B cell (primary cell): ENCODE measurements at regions of chr4 and their contacts with region 1.

Region 1: DNA sequence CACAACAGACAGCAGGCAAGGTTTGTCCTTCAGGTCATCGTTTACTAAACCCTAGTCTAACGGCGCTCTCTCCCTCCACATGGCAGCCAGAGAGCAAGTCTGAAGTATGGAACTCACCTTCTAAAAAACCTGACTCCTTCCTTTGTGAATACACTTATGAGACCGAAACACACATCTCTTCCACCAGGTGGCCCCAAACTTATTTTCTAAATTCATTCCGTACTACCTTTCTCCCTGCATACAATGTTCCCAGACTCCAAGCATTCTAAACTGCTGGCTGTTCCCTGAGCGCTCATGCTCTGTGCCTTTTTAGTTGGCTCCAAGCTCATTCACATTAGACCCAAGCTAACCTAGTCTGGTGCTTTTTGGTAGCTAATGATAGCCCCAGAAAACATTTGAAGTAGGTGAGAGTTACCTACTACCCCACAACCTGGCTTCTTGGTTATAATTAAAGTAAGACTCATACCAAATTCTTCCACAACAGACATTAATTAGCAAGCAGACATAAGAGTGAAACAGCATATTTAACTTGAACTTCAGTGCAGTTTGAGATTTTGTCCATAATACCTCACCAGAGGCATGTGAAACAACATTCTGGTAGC is 67.6 kb upstream of the DCLK2 start:
- DNase-seq: peak; percentile 60
- ATAC-seq: no peak
- H3K4me3 ChIP-seq: no peak overlapping the region
- H3K4me3 Mint-ChIP-seq: no peak overlapping the region
- H3K27ac ChIP-seq: no peak overlapping the region
- H3K27ac Mint-ChIP-seq: no peak overlapping the region
- H3K4me1 ChIP-seq: no peaks in the 10 kb centered on the region
- H3K4me1 Mint-ChIP-seq: no peaks in the 10 kb centered on the region
- H3K27me3 ChIP-seq: peaks cover 0 to 7% (median 2%) of the 10 kb centered on the region in 4 experiments
- H3K27me3 Mint-ChIP-seq: peaks cover 6% of the 10 kb centered on the region
- CTCF ChIP-seq: peak; percentile 60

Region 2: DNA sequence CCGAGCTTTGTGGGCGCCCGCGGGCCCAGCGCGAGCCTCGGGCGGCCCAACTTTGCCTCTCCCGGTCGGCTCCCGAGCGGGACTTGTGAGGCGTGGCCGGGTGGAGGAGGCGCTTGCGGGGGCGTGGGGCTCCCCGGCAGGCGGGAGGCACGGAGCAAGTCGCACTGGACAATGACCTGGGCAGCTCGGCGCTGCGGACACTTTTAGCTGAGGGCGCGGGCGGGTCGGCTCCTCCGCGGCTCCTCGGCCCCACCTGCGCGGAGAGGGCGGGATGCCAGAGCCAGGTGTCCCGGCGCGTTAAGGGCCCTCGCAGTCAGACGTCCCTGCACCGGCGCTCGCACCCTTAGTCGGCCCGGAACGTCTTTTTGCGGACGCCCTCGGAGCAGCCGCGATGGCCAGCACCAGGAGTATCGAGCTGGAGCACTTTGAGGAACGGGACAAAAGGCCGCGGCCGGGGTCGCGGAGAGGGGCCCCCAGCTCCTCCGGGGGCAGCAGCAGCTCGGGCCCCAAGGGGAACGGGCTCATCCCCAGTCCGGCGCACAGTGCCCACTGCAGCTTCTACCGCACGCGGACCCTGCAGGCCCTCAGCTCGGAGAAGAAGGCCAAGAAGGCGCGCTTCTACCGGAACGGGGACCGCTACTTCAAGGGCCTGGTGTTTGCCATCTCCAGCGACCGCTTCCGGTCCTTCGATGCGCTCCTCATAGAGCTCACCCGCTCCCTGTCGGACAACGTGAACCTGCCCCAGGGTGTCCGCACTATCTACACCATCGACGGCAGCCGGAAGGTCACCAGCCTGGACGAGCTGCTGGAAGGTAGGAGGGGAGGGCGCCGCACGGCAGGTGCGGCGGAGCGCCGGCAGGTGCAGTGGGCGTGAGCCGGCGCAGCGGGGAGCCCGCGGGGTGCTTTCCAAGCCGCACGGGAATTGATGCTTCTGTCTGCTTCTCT is 68.3 kb after region 1 on chr4:
- CTCF ChIA-PET with region 1: interaction called, 10 read pairs
- POLR2A ChIA-PET with region 1: no interaction called
- intact Hi-C with region 1: no loop called
- DNase-seq: peak; percentile 79
- ATAC-seq: peak; percentile 63
- H3K4me3 ChIP-seq: peak overlapping the region; percentile 47 to 72 (median 60)
- H3K4me3 Mint-ChIP-seq: peak overlapping the region; percentile 88
- H3K27ac ChIP-seq: no peak overlapping the region
- H3K27ac Mint-ChIP-seq: peak overlapping the region; percentile 57
- H3K4me1 ChIP-seq: peaks cover 18 to 21% of the 10 kb centered on the region in 2 donors
- H3K4me1 Mint-ChIP-seq: peaks cover 15% of the 10 kb centered on the region
- H3K27me3 ChIP-seq: peaks cover 0 to 30% (median 15%) of the 10 kb centered on the region in 4 experiments
- H3K27me3 Mint-ChIP-seq: peaks cover 41% of the 10 kb centered on the region
- CTCF ChIP-seq: peak; percentile 28

Region 3: DNA sequence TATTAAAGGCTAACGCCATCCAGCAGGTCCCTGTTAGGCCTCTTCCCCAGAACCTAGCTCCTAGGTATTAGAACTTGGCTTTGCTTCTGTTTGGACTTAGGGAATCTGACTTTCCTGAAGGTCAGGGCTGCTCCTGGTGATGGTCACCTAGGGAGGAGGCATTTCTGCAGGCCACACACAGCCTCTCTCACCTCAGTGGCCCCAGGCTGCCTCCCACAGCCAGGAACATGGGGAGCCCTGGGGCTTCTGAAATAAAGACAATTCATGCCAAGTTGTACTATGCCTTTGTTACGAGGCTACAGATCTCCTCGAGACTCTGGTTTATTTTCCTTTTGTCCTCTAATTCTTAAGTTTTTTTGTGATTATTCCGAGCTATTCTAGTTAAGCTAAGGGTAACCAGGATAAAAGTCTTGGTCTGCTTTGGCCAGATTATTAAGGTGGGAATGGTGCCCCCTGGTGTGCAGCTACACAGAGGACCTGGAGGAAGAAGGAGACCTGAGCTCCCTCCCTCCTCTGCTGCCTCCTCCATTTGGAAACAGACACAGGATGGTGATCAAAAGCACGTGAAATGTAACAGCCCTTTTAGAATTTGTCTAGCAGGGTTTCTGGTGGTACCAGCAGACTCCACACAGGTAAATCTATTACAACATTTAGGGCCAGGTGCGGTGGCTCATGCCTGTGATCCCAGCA is 198.7 kb after region 1 on chr4:
- CTCF ChIA-PET with region 1: interaction called, 155 read pairs
- POLR2A ChIA-PET with region 1: no interaction called
- intact Hi-C with region 1: no loop called
- DNase-seq: peak; percentile 67
- ATAC-seq: peak; percentile 21
- H3K4me3 ChIP-seq: no peak overlapping the region
- H3K4me3 Mint-ChIP-seq: no peak overlapping the region
- H3K27ac ChIP-seq: no peak overlapping the region
- H3K27ac Mint-ChIP-seq: no peak overlapping the region
- H3K4me1 ChIP-seq: peaks cover 0 to 6% of the 10 kb centered on the region in 2 donors
- H3K4me1 Mint-ChIP-seq: peaks cover 5% of the 10 kb centered on the region
- H3K27me3 ChIP-seq: no peaks in the 10 kb centered on the region
- H3K27me3 Mint-ChIP-seq: no peaks in the 10 kb centered on the region
- CTCF ChIP-seq: peak; percentile 64

Region 4: GRCh38 chr4:150217192-150217591 is 206.6 kb after region 1 on chr4:
- CTCF ChIA-PET with region 1: interaction called, 155 read pairs
- POLR2A ChIA-PET with region 1: no interaction called
- intact Hi-C with region 1: no loop called
- DNase-seq: no peak
- ATAC-seq: no peak
- H3K4me3 ChIP-seq: no peak overlapping the region
- H3K4me3 Mint-ChIP-seq: no peak overlapping the region
- H3K27ac ChIP-seq: no peak overlapping the region
- H3K27ac Mint-ChIP-seq: no peak overlapping the region
- H3K4me1 ChIP-seq: peaks cover 0 to 6% of the 10 kb centered on the region in 2 donors
- H3K4me1 Mint-ChIP-seq: peaks cover 5% of the 10 kb centered on the region
- H3K27me3 ChIP-seq: no peaks in the 10 kb centered on the region
- H3K27me3 Mint-ChIP-seq: no peaks in the 10 kb centered on the region
- CTCF ChIP-seq: no peak

Region 5: DNA sequence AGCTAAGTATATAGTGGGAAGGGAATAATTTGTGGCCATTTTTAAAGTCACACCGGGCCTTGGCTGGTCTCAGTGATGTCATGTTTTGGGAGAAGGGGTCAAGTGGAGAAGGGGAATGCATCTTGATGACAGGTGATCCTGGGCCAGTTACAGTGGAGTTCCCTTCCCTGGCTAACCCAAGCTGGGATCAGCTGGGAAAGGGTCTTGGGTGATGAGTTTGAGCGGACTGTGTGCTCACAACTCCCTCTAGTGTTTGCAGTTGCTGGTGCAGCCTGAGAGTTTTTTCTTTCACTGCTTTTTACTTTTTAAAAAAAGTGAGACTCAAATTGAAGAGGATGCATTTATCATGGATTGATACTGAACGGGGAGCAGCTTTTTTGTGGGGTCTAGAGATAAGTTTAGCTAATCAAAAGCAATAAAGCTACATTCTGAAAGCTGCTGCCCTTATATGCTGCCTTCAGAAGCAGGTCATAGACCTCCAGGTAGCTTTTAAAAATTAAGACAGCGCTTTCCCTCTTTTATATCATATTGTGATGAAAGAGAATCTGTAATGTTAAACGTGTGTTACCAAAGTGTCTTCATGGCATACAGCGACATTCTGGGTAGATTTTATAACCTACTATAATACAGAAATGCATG is 232.3 kb after region 1 on chr4:
- CTCF ChIA-PET with region 1: interaction called, 45 read pairs
- POLR2A ChIA-PET with region 1: no interaction called
- intact Hi-C with region 1: loop called (anchors 2 kb)
- DNase-seq: peak; percentile 45
- ATAC-seq: no peak
- H3K4me3 ChIP-seq: no peak overlapping the region
- H3K4me3 Mint-ChIP-seq: no peak overlapping the region
- H3K27ac ChIP-seq: no peak overlapping the region
- H3K27ac Mint-ChIP-seq: no peak overlapping the region
- H3K4me1 ChIP-seq: no peaks in the 10 kb centered on the region
- H3K4me1 Mint-ChIP-seq: no peaks in the 10 kb centered on the region
- H3K27me3 ChIP-seq: no peaks in the 10 kb centered on the region
- H3K27me3 Mint-ChIP-seq: no peaks in the 10 kb centered on the region
- CTCF ChIP-seq: peak; percentile 85